Activated CD4-positive, alpha-beta memory T cell treated with anti-CD3 and anti-CD28 coated beads for 36 hours (primary cell): ENCODE measurements at regions of chr15 and their contacts with region 1.

Region 1: DNA sequence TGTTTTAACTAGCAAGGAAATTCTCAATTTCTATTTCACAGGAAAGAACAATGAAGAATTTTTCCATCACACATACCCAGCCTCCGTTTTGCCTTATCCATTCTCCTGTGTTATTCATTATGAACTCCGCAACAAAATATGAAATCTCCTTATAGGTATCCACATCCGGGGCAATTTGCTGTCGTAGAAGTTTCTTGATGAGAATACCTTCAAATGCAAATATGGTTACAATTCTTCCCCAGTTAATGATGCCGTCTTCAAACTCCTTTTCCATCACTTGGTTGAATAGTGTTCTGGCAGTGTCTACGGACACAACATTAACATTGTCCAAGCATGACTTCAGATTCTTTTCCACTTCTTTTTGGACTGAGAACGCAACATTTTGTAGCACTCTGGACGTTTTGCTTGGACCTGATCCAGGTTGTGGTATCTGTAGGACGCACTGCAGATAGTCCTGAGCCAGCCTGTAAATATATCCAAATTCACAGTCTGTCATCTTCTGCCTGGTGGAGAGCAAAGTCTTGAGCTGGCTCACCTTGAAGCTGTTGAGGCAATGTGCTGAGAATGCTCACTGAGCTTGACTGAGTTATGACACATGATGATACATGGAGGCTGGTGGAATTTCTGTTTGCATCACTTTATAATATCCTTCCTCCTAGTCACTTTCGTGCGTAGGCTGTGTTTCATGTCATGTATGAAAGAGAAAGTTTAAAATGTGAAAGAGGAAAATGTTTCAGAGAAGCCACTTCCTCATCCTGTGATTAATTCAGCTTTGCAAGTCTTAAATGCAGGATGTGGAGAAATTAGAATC is at the start of gene BCL2A1:
- DNase-seq: peak; percentile 88
- H3K4me3 Mint-ChIP-seq: peak within 1 kb of the TSS; percentile 96
- H3K27ac Mint-ChIP-seq: peak within 1 kb of the TSS; percentile 99
- H3K4me1 Mint-ChIP-seq: peaks cover 49% of the 10 kb centered on the region
- H3K27me3 Mint-ChIP-seq: no peaks in the 10 kb centered on the region
- total RNA-seq, gene BCL2A1: 110 to 111 TPM

Region 2: GRCh38 chr15:78872972-78873792 is 1097.6 kb before region 1 on chr15:
- CTCF ChIA-PET with region 1: no interaction called
- POLR2A ChIA-PET with region 1: no interaction called
- intact Hi-C with region 1: loop called (anchors 10 kb)
- DNase-seq: peak; percentile 94
- H3K4me3 Mint-ChIP-seq: peak overlapping the region; percentile 90
- H3K27ac Mint-ChIP-seq: peak overlapping the region; percentile 99
- H3K4me1 Mint-ChIP-seq: peaks cover 37% of the 10 kb centered on the region
- H3K27me3 Mint-ChIP-seq: no peaks in the 10 kb centered on the region

Region 3: DNA sequence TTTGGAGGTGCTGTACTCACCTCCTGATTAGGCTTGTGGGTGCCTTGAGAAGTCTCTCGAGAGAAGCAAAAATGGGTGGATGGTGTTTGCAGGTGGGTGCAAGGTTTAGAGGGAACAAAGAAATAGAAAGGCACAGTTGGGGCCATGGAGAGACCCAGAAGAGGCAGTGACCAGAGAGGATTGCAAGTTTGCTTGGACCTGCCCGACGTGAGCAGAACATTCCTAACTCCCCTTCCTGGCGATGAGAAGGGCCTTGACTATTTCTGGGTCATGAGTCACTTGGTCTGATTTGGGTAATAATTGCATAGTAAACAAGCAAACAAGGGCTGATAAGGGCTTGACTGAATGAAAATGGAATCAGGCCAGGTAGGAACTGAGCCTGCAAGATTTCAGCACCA is 1019.0 kb before region 1 on chr15:
- CTCF ChIA-PET with region 1: no interaction called
- POLR2A ChIA-PET with region 1: no interaction called
- intact Hi-C with region 1: no loop called
- DNase-seq: no peak
- H3K4me3 Mint-ChIP-seq: no peak overlapping the region
- H3K27ac Mint-ChIP-seq: no peak overlapping the region
- H3K4me1 Mint-ChIP-seq: peaks cover 9% of the 10 kb centered on the region
- H3K27me3 Mint-ChIP-seq: no peaks in the 10 kb centered on the region

Region 4: GRCh38 chr15:79721256-79721655 is 249.6 kb before region 1 on chr15:
- CTCF ChIA-PET with region 1: no interaction called
- POLR2A ChIA-PET with region 1: no interaction called
- intact Hi-C with region 1: no loop called
- DNase-seq: no peak
- H3K4me3 Mint-ChIP-seq: no peak overlapping the region
- H3K27ac Mint-ChIP-seq: no peak overlapping the region
- H3K4me1 Mint-ChIP-seq: no peaks in the 10 kb centered on the region
- H3K27me3 Mint-ChIP-seq: peaks cover 7% of the 10 kb centered on the region

Region 5: DNA sequence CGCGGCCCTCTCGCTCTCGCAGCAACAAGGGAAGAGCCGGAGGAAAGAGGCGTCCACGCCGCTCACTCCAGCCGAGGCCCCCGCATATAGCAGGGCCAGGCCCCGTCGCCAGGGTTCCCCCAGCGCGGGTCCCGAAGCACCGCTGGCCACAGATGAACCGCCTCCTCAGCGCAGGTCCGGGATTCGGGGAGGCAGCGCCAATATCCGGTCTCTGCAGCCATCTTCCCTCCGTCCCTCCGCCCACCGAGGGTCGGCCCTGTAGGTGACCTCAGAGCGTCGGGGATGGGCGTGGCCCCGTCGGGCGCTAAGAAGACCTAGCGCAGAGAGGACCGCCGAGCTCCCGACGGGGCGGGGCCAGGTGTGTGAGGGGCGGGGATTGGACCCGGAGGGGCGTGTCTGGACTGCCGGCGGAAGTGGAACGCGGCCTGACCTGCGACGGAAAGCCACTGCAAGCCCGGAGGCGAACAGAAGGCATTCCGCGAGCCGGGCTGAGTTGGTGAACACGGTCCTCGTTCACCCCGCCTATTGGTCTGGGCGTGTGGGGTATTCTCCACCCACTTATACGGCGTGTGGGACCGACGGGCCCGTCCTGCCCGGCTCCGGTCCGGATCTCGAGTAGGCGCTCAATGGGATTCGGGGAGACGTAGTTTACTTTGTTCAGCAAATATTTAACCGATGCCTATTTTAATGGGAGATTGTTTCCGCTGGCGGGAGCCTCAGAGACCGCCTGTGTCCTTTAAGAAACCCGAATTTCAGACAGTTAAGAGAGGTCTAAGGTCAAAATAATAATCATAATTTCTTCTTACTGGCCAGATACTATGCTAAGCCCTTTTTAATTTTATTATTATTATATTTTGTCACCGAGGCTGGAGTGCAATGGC is 47.1 kb before region 1 on chr15:
- CTCF ChIA-PET with region 1: interaction called, 15 read pairs
- POLR2A ChIA-PET with region 1: interaction called, 70 read pairs
- intact Hi-C with region 1: loop called (anchors 1 kb)
- DNase-seq: peak; percentile 99
- H3K4me3 Mint-ChIP-seq: peak overlapping the region; percentile 93
- H3K27ac Mint-ChIP-seq: peak overlapping the region; percentile 95
- H3K4me1 Mint-ChIP-seq: peaks cover 20% of the 10 kb centered on the region
- H3K27me3 Mint-ChIP-seq: no peaks in the 10 kb centered on the region

Region 6: GRCh38 chr15:79957741-79958140 is 13.1 kb before region 1 on chr15:
- CTCF ChIA-PET with region 1: interaction called, 3 read pairs
- POLR2A ChIA-PET with region 1: no interaction called
- intact Hi-C with region 1: loop called (anchors 1 kb)
- DNase-seq: no peak
- H3K4me3 Mint-ChIP-seq: no peak overlapping the region
- H3K27ac Mint-ChIP-seq: no peak overlapping the region
- H3K4me1 Mint-ChIP-seq: peaks cover 51% of the 10 kb centered on the region
- H3K27me3 Mint-ChIP-seq: no peaks in the 10 kb centered on the region

Region 7: GRCh38 chr15:80003171-80003570 is 32.3 kb after region 1 on chr15:
- CTCF ChIA-PET with region 1: no interaction called
- POLR2A ChIA-PET with region 1: no interaction called
- intact Hi-C with region 1: no loop called
- DNase-seq: no peak
- H3K4me3 Mint-ChIP-seq: no peak overlapping the region
- H3K27ac Mint-ChIP-seq: no peak overlapping the region
- H3K4me1 Mint-ChIP-seq: no peaks in the 10 kb centered on the region
- H3K27me3 Mint-ChIP-seq: no peaks in the 10 kb centered on the region

Region 8: DNA sequence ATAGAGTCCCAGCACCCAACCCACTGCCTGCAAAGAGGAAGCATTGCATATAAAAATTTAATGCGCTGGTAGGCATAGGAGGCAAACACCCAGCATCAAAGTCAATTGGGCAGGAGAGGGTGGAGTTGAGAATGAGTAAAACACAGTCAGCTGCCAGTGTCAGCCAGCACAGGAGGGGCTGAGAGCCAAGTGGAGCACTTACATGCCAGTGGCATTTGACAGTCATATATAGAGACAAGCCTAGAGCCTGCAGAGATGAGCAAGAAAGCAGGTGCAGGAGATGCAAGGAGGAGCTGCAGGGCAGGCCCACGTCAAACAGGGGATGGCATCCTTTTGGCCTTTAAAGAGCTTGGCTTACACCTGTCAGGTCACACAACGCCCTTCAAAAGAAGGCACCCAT is 61.0 kb after region 1 on chr15:
- CTCF ChIA-PET with region 1: interaction called, 4 read pairs
- POLR2A ChIA-PET with region 1: interaction called, 10 read pairs
- intact Hi-C with region 1: loop called (anchors 1 kb)
- DNase-seq: peak; percentile 69
- H3K4me3 Mint-ChIP-seq: no peak overlapping the region
- H3K27ac Mint-ChIP-seq: peak overlapping the region; percentile 76
- H3K4me1 Mint-ChIP-seq: peaks cover 26% of the 10 kb centered on the region
- H3K27me3 Mint-ChIP-seq: no peaks in the 10 kb centered on the region

Region 9: GRCh38 chr15:80099241-80099640 is 128.4 kb after region 1 on chr15:
- CTCF ChIA-PET with region 1: no interaction called
- POLR2A ChIA-PET with region 1: no interaction called
- intact Hi-C with region 1: no loop called
- DNase-seq: no peak
- H3K4me3 Mint-ChIP-seq: no peak overlapping the region
- H3K27ac Mint-ChIP-seq: no peak overlapping the region
- H3K4me1 Mint-ChIP-seq: peaks cover 27% of the 10 kb centered on the region
- H3K27me3 Mint-ChIP-seq: no peaks in the 10 kb centered on the region

Region 10: GRCh38 chr15:80152180-80152845 is 181.5 kb after region 1 on chr15:
- CTCF ChIA-PET with region 1: no interaction called
- POLR2A ChIA-PET with region 1: no interaction called
- intact Hi-C with region 1: loop called (anchors 2 kb)
- DNase-seq: peak; percentile 98
- H3K4me3 Mint-ChIP-seq: peak overlapping the region; percentile 74
- H3K27ac Mint-ChIP-seq: peak overlapping the region; percentile 50
- H3K4me1 Mint-ChIP-seq: peaks cover 23% of the 10 kb centered on the region
- H3K27me3 Mint-ChIP-seq: no peaks in the 10 kb centered on the region